ENCODE measurements at regions of chr1 and their contacts with region 1.

Region 1: GRCh38 chr1:118151312-118151937 is 33.6 kb downstream of the SPAG17 start:
- H3K4me3 Mint-ChIP-seq: no peak overlapping the region
- H3K27ac Mint-ChIP-seq: no peak overlapping the region
- H3K4me1 Mint-ChIP-seq: no peaks in the 10 kb centered on the region
- H3K27me3 Mint-ChIP-seq: peaks cover 1% of the 10 kb centered on the region

Region 2: GRCh38 chr1:118049981-118050380 is 101.4 kb before region 1 on chr1:
- intact Hi-C with region 1: no loop called
- H3K4me3 Mint-ChIP-seq: no peak overlapping the region
- H3K27ac Mint-ChIP-seq: no peak overlapping the region
- H3K4me1 Mint-ChIP-seq: peaks cover 10% of the 10 kb centered on the region
- H3K27me3 Mint-ChIP-seq: peaks cover 4% of the 10 kb centered on the region

Region 3: DNA sequence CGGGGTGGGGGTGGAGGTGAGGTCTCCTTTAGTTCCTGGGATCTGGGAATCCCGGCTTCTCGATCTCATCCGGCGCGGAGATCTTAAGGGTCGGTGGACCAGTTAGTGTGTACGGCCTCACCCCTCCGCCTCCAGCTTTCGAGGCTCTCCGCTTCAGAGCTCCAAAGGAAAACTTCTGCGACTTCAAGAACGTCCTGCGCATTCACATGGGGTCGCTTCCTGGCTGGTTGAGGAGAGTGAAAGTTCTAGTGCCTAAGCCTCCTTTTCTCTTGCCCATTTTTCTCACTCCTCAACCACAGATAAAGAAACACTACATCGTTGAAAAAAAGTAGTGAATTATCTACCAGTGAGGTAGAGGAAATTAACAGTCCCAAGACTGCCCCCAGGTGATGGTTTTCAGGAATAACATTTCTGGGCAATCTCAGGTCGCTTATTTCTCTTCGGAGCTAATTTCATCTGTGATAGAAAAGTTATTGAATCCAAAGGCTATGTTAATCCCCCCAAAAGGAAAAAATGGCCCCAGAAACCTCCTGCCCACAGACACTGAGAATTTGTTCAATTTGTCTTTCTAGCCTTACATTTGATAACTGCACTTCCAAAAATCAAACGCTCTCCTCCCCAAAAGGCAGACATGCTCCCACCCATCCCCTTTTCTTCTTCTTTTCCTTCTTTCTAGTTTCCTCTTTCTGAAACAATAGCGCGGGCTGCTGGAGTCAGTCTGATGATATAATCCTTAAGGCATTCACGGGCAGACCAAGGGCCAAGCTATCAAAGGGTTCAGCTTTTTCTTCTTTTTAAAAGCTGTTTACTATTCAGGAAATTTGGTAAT is 857.3 kb after region 1 on chr1:
- intact Hi-C with region 1: loop called (anchors 1 kb)
- H3K4me3 Mint-ChIP-seq: peak overlapping the region; percentile 51
- H3K27ac Mint-ChIP-seq: no peak overlapping the region
- H3K4me1 Mint-ChIP-seq: peaks cover 13% of the 10 kb centered on the region
- H3K27me3 Mint-ChIP-seq: peaks cover 69% of the 10 kb centered on the region

Measured in dendritic cell treated with granulocyte-macrophage colony-stimulating factor and Interleukin-4, amounts not matched to agents 40 ng/mL and 50 ng/mL, for 4 days (primary cell).